ENCODE measurements at regions of chr2 and their contacts with region 1.

Region 1: DNA sequence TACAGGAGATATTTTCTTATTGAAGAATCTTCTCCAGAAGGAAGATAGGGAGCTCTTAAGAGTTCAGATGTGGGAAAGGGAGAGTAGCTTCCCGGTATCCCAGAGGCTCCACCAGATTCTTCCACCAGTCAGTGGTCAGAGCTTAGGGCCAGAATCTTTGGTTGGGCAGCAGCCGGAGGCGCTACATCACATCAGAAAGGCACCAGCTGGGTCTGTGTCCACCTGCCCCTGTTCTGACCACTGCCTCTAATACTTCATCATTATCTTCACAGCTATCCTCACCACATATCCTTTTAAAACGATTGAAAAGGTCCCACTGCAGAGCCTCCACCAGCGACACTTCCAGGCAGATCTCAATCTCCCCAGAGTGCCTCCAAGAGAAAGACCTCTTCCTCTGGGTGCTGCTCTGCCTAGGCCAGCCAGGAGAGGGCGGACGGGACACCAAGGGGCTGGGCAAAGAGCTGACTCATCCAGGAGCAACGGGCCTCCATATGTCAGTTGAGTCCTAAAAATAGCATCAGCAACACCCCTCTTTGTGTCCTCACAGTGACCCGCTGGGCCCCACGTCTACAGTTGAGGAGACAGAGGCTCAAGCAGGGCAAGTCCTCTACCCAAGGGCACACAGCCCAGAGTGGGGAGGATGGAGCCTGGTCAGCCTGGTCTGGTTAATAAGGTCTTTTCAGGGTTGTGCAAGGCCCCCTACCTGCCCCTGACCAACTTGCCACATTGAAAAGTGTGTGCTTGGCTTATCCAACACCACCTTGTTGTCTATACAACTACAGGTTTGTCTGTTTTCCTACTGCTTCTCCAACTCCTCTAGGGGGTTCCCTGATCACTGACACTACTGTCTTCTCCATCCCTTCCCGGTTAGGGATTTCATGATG is 81.2 kb downstream of the ADD2 start:
- DNase-seq: peak; percentile 51 to 82
- H3K4me3 ChIP-seq: no peak overlapping the region
- H3K27ac ChIP-seq: peak overlapping the region; percentile 51; the same call in 1 of the 2 replicates
- H3K4me1 ChIP-seq: peaks cover 0 to 9% (median 2%) of the 10 kb centered on the region in 4 experiments; a peak in 5 of 7 replicates
- H3K27me3 ChIP-seq: no peaks in the 10 kb centered on the region
- CTCF ChIP-seq: peak; percentile 86 to 91 (median 90)
- EP300 ChIP-seq: no peak
- POLR2A ChIP-seq: no peak
- RAD21 ChIP-seq: peak; percentile 75 to 84

Region 2: DNA sequence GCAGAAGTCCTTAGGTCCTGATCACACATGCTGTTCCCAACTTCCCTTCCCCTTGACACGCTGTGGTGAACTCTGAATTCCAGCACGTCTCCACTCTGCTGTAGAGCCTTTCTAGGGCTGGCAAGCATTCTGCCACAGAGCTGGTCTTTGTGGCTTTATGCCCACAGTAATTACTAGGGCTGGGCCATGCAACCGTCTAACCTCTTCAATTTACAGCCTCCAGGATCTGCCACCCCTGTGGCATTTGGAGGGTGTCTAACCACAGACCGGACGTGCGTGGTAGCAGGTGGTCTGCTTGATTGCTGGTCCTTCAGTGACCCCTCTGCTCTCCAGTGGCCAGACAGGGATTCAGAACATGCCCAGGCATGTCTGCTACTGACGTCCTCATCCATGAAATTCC is 90.1 kb before region 1 on chr2:
- CTCF ChIA-PET with region 1: no interaction called
- POLR2A ChIA-PET with region 1: no interaction called
- DNase-seq: no peak
- H3K4me3 ChIP-seq: no peak overlapping the region
- H3K27ac ChIP-seq: no peak overlapping the region
- H3K4me1 ChIP-seq: peaks cover 0 to 2% (median 0%) of the 10 kb centered on the region in 4 experiments; a peak in 1 of 7 replicates
- H3K27me3 ChIP-seq: no peaks in the 10 kb centered on the region
- CTCF ChIP-seq: no peak
- EP300 ChIP-seq: no peak
- POLR2A ChIP-seq: no peak
- RAD21 ChIP-seq: no peak

Region 3: DNA sequence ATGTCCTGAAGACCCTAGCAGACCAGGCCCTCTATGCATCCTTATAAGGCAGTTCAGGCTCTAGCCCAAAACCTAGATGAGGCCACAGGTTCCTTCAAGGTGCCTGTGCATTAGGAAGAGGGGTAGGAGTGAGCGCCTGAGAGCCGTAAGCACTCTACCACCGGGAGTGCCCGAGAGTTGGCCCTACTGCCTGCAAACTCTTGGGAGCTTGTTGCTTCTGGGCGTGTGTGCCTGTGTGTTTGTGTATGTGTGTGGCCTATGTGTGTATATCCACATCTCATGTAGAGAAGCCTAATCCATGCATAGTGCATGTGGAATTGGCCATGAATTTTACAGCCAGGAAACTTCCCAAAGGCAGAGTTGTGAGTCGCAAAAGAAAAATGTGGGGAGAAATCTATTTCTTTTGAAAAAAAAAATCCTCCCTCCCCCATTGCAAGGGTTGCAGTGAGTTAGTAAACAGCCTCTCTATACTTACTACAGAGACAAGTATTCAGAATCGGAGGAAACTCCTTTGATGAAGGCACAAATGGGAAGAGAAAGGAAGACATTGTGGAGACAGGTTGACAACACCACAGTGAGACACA is 15.6 kb before region 1 on chr2:
- CTCF ChIA-PET with region 1: interaction called, 27 read pairs
- POLR2A ChIA-PET with region 1: interaction called, 6 read pairs
- DNase-seq: no peak
- H3K4me3 ChIP-seq: no peak overlapping the region
- H3K27ac ChIP-seq: no peak overlapping the region
- H3K4me1 ChIP-seq: no peaks in the 10 kb centered on the region
- H3K27me3 ChIP-seq: no peaks in the 10 kb centered on the region
- CTCF ChIP-seq: no peak
- EP300 ChIP-seq: no peak
- POLR2A ChIP-seq: no peak
- RAD21 ChIP-seq: no peak

Region 4: DNA sequence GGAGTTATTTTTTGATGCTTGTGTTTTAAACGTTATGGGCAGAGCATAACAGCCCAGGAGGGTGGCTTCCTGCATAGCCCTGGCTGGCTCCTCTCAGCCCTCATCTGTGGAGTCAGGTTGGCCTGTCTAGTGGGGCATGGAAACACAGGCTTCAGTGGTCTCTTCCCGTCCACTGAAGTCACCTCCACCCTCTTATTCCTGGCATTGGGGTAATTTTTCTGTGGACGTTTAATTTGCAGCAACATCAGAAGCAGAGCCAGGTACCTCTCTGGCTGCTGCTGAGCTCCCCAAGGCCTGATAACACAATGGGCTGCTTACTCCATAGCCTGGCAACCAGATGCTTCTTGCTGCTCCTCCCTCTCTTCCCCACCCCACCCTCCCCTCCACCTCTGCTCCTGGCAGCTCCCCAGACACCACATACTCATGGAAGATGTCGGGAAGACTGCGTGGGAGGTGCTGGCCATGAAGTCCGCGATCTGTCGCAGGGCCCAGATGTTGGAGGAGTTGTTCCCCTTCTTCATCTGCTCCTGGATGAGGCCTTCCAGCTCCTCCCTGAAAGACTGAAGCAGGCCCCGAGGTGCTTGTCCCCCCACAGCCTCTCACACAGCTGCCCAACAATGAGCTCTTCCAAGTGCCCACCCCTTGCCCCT is 17.2 kb after region 1 on chr2:
- CTCF ChIA-PET with region 1: interaction called, 15 read pairs
- POLR2A ChIA-PET with region 1: no interaction called
- DNase-seq: no peak
- H3K4me3 ChIP-seq: no peak overlapping the region
- H3K27ac ChIP-seq: no peak overlapping the region
- H3K4me1 ChIP-seq: no peaks in the 10 kb centered on the region
- H3K27me3 ChIP-seq: no peaks in the 10 kb centered on the region
- CTCF ChIP-seq: no peak
- EP300 ChIP-seq: no peak
- POLR2A ChIP-seq: no peak
- RAD21 ChIP-seq: no peak

Region 5: DNA sequence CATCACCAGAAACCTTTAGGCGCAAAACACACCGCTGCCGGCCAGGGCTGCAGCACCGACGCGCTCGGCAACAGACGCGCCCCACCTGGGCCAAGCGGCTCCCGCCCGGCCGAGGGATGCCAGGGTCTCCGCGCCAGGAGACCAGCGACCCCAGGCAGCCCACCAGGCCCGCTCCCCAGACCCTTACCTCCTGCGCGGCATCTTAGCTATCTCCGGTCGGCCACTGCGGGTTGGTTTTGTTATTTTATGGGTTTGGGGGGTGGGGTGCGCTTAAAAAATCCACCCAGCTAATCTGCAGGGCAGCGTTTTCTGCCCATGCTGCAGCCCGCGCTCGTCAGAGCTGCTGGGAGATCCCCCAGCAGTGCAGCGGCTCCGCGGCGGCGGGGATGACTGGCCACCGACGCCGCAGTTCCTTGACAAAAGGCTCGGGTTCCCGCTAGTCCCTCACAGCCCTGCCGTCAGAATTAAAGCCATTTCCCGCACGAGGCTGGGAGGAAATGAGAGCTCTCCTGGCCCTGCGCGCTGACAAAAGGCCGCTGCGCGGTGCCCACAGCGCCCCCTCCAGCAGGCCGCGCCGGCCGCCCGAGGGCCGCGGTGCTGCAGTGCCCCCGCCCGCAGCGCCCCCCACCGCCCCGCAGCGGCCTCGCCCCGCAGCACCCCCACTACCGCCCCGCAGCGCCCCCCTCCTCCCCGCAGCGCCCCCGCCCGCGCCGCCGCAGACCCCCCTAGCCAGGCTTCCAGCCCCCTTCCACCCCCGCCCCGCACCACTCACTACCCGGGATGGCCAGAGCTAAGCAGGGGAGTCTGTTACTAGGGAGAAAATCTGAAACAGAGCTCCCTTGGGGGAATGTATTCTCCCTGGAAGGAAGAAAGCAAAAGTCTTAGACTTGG is 81.1 kb after region 1 on chr2 and contains the start of gene ADD2:
- CTCF ChIA-PET with region 1: interaction called, 67 read pairs
- POLR2A ChIA-PET with region 1: interaction called, 8 read pairs
- DNase-seq: peak in 1 of 2 experiments; percentile 80
- H3K4me3 ChIP-seq: peak within 1 kb of the TSS; percentile 67 to 86 (median 84)
- H3K27ac ChIP-seq: peak within 1 kb of the TSS; percentile 92
- H3K4me1 ChIP-seq: peaks cover 8 to 25% (median 16%) of the 10 kb centered on the region in 4 experiments; a peak in 6 of 7 replicates
- H3K27me3 ChIP-seq: no peaks in the 10 kb centered on the region
- CTCF ChIP-seq: peak; percentile 60 to 93 (median 71)
- EP300 ChIP-seq: no peak
- POLR2A ChIP-seq: peak; percentile 73 to 82
- RAD21 ChIP-seq: peak; percentile 22 to 56; a peak in 3 of 4 replicates
- total RNA-seq, gene ADD2: 166 and 170 TPM in 2 replicates